A549 (cell line): ENCODE measurements at regions of chr3 and their contacts with region 1.

Region 1: GRCh38 chr3:123723522-123724168 is 138.8 kb upstream of the HACD2 start:
- DNase-seq: peak; percentile 78 to 84
- ATAC-seq: peak; percentile 79 to 80
- H3K4me3 ChIP-seq: no peak overlapping the region
- H3K27ac ChIP-seq: peak overlapping the region; percentile 56 to 72; a peak in 4 of 6 replicates
- H3K4me1 ChIP-seq: peaks cover 22% of the 10 kb centered on the region
- CTCF ChIP-seq: peak; percentile 74
- EP300 ChIP-seq: no peak
- POLR2A ChIP-seq: no peak
- RAD21 ChIP-seq: peak; percentile 71 to 73

Region 2: DNA sequence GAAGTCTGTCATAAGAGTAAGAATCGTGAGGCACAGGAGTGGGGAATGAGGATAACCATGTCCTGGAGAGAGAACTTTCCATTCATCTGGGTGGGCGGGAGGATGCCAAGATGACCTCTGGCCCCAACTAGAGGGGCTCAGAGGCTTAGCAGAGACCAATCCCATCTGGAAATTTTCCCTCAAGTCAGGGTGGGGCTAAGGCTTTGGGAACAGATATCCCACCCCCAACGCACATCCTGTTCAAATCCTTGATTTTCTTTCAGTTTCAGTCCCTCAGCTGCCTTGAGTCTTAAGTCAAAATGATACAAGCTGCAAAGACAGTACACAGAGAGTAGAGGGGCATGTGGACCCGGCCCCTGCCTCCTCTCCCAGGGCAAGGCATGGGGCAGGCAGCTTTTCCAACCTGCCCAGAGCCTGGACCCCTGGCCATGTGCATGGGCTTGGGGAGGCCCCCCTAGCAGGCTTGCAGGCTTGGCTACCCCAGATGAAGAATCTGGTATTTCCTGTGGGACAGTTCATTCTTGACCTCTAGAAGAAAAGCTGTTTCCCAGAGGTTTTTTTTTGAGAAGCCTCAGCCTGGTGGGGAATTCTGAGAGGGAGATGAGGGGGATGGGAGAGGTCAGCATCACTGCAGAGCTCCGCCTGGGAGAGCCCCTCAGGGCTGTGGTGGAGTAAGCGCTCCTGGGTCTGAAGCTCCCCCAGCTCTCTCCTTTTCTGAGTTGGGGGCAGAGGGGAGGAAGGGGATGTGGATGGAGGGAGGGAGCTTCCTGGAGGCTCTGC is 29.1 kb before region 1 on chr3:
- CTCF ChIA-PET with region 1: interaction called, 14 read pairs
- POLR2A ChIA-PET with region 1: no interaction called
- DNase-seq: no peak
- ATAC-seq: no peak
- H3K4me3 ChIP-seq: no peak overlapping the region
- H3K27ac ChIP-seq: no peak overlapping the region
- H3K4me1 ChIP-seq: no peaks in the 10 kb centered on the region
- CTCF ChIP-seq: no peak
- EP300 ChIP-seq: no peak
- POLR2A ChIP-seq: no peak
- RAD21 ChIP-seq: no peak

Region 3: DNA sequence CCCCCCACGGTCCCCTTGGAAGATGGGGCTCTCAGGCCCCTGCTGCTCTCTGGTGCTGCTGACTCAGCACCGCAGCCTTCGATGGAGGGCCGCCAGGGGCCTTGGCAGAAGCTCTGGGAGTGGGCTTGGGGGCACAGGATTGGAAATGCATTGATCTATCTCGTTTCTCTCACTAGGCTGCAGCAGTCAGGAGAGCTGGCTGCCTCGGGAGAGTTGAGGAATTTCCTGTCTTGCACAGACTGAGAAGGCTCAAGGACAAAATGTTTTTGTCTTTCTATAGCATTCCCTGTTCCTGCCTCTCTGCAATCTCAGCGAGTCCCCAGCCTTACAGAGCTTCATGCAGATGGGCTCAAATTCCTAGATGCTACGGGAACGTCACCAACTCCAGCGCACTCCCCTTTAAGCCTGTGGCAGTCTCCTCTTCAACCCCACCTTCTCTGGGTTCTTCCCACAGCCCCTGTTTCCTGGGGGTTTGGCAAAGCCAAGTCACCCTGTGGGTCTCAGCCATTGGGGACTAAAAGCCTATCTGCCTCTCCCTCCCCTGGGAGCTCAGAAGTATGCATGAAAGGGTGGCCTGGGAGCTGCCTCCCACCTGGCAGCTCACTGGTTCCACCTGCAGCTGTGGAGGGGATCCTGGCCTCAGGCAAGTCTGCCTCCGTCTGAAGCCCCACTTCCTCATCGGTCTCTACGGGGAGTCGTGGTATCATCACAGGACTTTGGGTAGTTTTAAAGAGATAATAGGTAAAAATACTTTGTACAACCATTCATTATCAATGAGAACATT is 11.4 kb before region 1 on chr3:
- CTCF ChIA-PET with region 1: interaction called, 25 read pairs
- POLR2A ChIA-PET with region 1: no interaction called
- DNase-seq: no peak
- ATAC-seq: no peak
- H3K4me3 ChIP-seq: no peak overlapping the region
- H3K27ac ChIP-seq: no peak overlapping the region
- H3K4me1 ChIP-seq: no peaks in the 10 kb centered on the region
- CTCF ChIP-seq: no peak
- EP300 ChIP-seq: no peak
- POLR2A ChIP-seq: no peak
- RAD21 ChIP-seq: no peak

Region 4: DNA sequence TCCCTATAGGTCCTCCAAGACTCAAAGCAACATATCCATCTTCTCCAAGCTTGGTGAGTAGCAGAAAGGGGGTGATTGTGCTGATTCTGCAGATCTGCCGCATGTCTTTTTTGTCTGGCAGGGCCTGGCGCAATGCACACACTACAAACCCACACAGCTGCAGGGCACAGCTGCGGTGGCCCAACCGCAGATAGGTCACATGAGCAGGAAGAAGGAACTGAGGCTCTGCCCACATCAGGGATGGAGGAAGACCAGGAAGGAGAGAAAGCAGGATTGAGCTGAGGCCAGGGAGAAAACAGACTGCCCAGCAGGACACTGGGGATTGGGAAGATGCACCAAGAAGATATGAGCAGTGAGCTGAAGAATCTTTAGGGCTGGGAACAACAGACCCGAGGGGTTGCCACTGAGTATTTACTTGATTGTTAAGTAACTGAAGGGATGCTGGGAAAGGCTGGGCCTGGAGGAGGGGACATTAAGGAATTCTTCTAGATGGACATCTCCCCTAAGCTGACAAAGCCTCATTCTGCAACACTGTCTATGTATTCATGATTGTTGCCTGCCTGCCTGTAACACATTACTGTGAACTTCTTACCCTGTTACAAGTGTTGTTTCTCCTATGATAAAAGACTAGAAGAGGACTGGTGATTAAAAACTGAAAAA is 33.8 kb after region 1 on chr3:
- CTCF ChIA-PET with region 1: interaction called, 100 read pairs
- POLR2A ChIA-PET with region 1: no interaction called
- DNase-seq: no peak
- ATAC-seq: no peak
- H3K4me3 ChIP-seq: no peak overlapping the region
- H3K27ac ChIP-seq: peak overlapping the region; percentile 94 to 97
- H3K4me1 ChIP-seq: peaks cover 68% of the 10 kb centered on the region
- CTCF ChIP-seq: no peak
- EP300 ChIP-seq: no peak
- POLR2A ChIP-seq: no peak
- RAD21 ChIP-seq: no peak

Region 5: DNA sequence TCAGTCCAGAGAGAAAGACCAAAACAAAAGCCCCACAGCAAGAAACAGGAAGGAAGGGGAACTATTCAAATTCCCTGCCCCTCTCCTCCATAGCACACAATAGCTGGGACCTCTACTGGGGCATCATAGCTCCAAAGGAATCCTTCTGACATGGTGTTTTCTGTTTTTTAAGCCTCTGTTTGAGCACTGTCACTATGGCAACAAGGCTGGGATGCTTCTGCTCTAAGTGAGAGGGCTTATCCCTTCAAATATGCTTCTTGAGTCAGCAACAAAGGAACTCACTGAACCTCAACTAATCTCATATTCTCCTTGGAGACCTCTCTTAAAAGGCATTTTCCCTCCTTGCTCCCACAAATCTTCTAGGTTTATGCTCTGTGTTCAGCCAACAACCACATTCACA is 120.0 kb after region 1 on chr3:
- CTCF ChIA-PET with region 1: no interaction called
- POLR2A ChIA-PET with region 1: no interaction called
- DNase-seq: no peak
- ATAC-seq: no peak
- H3K4me3 ChIP-seq: no peak overlapping the region
- H3K27ac ChIP-seq: no peak overlapping the region
- H3K4me1 ChIP-seq: no peaks in the 10 kb centered on the region
- CTCF ChIP-seq: no peak
- EP300 ChIP-seq: no peak
- POLR2A ChIP-seq: no peak
- RAD21 ChIP-seq: no peak

Region 6: GRCh38 chr3:123884203-123884831 is 160.7 kb after region 1 on chr3 and contains the start of gene MYLK:
- CTCF ChIA-PET with region 1: interaction called, 11 read pairs
- POLR2A ChIA-PET with region 1: no interaction called
- DNase-seq: peak; percentile 83 to 93
- ATAC-seq: peak; percentile 98 to 99
- H3K4me3 ChIP-seq: peak within 1 kb of the TSS; percentile 86
- H3K27ac ChIP-seq: peak within 1 kb of the TSS; percentile 90 to 91
- H3K4me1 ChIP-seq: peaks cover 16% of the 10 kb centered on the region
- CTCF ChIP-seq: no peak
- EP300 ChIP-seq: no peak
- POLR2A ChIP-seq: peak; percentile 34; the same call in 1 of the 2 replicates
- RAD21 ChIP-seq: peak in 1 of 2 experiments; percentile 16; a peak in 1 of 5 replicates
- polyA plus RNA-seq, gene MYLK: 13.6 and 17.4 TPM in 2 replicates